OCI-LY7 (cell line): ENCODE measurements at regions of chr12 and their contacts with region 1.

Region 1: GRCh38 chr12:110048242-110049027 is at the start of gene C12orf76:
- DNase-seq: peak; percentile 97
- H3K4me3 ChIP-seq: peak within 1 kb of the TSS; percentile 90
- H3K27ac ChIP-seq: peak within 1 kb of the TSS; percentile 98
- H3K4me1 ChIP-seq: peaks cover 53% of the 10 kb centered on the region
- CTCF ChIP-seq: no peak
- total RNA-seq, gene C12orf76: 17.0 and 24.4 TPM in 2 replicates

Region 2: DNA sequence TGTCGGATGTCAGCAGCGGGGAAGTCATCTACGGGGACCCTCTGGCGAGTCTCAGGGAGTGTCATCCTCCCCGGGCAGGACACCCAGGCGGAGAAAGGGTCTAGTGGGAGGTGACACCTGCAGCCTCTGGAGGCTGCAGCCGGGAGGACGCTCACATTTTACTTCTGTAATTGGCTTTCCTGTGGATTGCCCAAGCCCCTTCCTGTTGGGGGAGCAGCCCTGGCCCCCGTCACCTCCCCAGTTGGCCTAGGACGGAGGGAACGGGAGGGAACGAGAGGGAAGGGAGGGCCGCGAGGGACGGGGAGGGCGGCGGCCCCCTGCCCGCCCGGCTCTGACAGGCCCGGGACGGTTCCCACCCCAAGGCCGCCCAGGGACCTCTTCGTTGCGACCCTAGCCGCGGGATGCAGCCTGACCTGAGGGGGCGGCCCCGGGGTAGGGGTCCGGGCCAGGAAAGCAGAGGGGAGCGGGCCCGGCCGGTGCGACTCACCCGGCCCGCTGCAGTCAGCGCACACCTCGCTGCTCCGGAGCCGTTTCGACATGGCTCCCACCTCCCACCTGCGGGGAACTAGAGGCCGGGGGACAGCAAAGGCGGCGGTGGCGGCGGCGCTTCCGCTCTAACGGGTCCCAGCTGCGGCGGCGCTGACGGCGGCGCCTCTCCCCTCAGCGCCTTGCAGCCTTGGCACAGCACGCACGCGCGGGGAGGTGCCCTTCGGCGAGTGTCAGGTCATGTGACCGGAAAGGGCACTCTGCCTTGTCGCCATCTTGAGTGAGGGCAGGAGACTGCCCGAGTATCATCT is 52.6 kb before region 1 on chr12 and contains the start of gene GIT2:
- CTCF ChIA-PET with region 1: no interaction called
- POLR2A ChIA-PET with region 1: interaction called, 6 read pairs
- intact Hi-C with region 1: loop called (anchors 2 kb)
- DNase-seq: peak; percentile 99
- H3K4me3 ChIP-seq: peak within 1 kb of the TSS; percentile 96
- H3K27ac ChIP-seq: peak within 1 kb of the TSS; percentile 92
- H3K4me1 ChIP-seq: peaks cover 37% of the 10 kb centered on the region
- CTCF ChIP-seq: peak; percentile 35; the same call in 1 of the 2 replicates
- total RNA-seq, gene GIT2: 57.1 and 60.6 TPM in 2 replicates

Region 3: DNA sequence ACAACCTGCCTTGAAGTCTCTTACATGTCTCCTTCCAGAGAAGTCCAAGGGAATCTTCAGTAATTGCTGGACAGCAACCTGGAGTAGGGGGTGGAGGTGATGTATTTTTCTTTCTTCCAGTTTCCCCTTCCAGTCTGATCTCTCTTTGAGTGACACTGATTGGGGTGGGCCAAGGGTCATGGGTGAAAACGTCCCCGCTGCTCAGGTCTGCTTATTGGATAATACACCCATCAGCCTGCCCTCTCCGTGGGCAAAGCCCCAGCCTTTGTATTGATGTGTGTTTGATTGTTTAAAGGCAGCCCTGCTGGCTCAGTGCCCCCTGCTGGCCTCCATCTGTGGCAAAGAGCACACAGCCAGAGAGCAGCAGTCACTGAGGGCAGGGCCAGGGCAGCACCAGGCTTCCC is 196.9 kb after region 1 on chr12:
- CTCF ChIA-PET with region 1: no interaction called
- POLR2A ChIA-PET with region 1: no interaction called
- intact Hi-C with region 1: loop called (anchors 5 kb)
- DNase-seq: peak; percentile 68
- H3K4me3 ChIP-seq: no peak overlapping the region
- H3K27ac ChIP-seq: no peak overlapping the region
- H3K4me1 ChIP-seq: peaks cover 5% of the 10 kb centered on the region
- CTCF ChIP-seq: peak; percentile 86